Breast epithelium (tissue), 4 donors: ENCODE measurements at regions of chr2 and their contacts with region 1.

Region 1: GRCh38 chr2:234388554-234388953 is 108.3 kb downstream of the ARL4C start:
- DNase-seq: no peak
- H3K4me3 ChIP-seq: no peak overlapping the region
- H3K27ac ChIP-seq: no peak overlapping the region
- H3K4me1 ChIP-seq: no peaks in the 10 kb centered on the region
- H3K27me3 ChIP-seq: no peaks in the 10 kb centered on the region
- CTCF ChIP-seq: no peak
- POLR2A ChIP-seq: no peak

Region 2: GRCh38 chr2:234326694-234327093 is 61.9 kb before region 1 on chr2:
- intact Hi-C with region 1: loop called (anchors 2 kb)
- DNase-seq: no peak
- H3K4me3 ChIP-seq: no peak overlapping the region
- H3K27ac ChIP-seq: peak overlapping the region in 1 of 2 donors; percentile 35
- H3K4me1 ChIP-seq: no peaks in the 10 kb centered on the region
- H3K27me3 ChIP-seq: no peaks in the 10 kb centered on the region
- CTCF ChIP-seq: no peak
- POLR2A ChIP-seq: no peak

Region 3: GRCh38 chr2:234406085-234406484 is 17.5 kb after region 1 on chr2:
- intact Hi-C with region 1: loop called (anchors 1 kb)
- DNase-seq: no peak
- H3K4me3 ChIP-seq: no peak overlapping the region
- H3K27ac ChIP-seq: no peak overlapping the region
- H3K4me1 ChIP-seq: no peaks in the 10 kb centered on the region
- H3K27me3 ChIP-seq: no peaks in the 10 kb centered on the region
- CTCF ChIP-seq: no peak
- POLR2A ChIP-seq: no peak